ENCODE measurements at regions of chr13 and their contacts with region 1.

Region 1: GRCh38 chr13:28324181-28324789 is 170.6 kb downstream of the FLT1 start:
- DNase-seq: peak; percentile 46
- H3K4me3 ChIP-seq: no peak overlapping the region
- H3K27ac ChIP-seq: no peak overlapping the region
- H3K4me1 ChIP-seq: no peaks in the 10 kb centered on the region
- H3K27me3 ChIP-seq: no peaks in the 10 kb centered on the region
- CTCF ChIP-seq: peak; percentile 68 to 82

Region 2: DNA sequence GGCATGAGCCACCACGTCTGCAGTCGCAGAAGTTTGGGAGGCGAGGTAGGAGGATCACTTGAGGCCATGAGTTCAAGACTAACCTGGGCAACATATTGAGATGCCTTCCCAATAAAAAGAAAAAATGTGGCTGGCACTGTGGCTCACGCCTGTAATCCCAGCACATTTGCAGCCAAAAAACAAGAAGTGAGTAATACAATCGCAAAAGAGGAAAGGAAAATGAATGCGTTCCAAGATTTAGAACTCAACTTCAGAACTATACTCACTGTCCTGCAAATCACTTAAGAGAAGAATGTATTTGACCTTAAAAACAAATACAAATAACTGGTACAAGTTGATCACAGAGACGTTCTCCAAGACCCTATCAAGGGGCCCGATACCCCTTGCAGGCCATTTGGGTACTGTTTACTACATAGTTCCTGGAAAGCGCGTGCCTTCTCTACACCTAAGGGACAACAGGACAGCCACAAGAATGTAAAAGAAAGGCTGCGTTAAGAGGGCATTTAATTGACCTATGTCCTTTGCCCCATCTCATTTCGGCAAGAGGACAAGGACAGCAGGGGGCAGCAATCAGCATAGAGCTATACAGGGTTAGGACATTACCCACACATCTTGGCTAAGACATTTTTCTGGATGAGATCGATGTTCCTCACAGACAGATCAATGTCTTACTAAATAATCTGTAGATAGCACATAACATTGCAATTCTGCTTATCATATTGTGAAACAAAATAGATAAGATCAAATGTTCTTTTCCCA is 265.2 kb before region 1 on chr13:
- CTCF ChIA-PET with region 1: no interaction called
- dilution Hi-C with region 1: no loop called
- in situ Hi-C with region 1: no loop called
- intact Hi-C with region 1: loop called (anchors 5 kb)
- DNase-seq: peak; percentile 16
- H3K4me3 ChIP-seq: no peak overlapping the region
- H3K27ac ChIP-seq: no peak overlapping the region
- H3K4me1 ChIP-seq: no peaks in the 10 kb centered on the region
- H3K27me3 ChIP-seq: no peaks in the 10 kb centered on the region
- CTCF ChIP-seq: peak; percentile 45 to 67

Region 3: DNA sequence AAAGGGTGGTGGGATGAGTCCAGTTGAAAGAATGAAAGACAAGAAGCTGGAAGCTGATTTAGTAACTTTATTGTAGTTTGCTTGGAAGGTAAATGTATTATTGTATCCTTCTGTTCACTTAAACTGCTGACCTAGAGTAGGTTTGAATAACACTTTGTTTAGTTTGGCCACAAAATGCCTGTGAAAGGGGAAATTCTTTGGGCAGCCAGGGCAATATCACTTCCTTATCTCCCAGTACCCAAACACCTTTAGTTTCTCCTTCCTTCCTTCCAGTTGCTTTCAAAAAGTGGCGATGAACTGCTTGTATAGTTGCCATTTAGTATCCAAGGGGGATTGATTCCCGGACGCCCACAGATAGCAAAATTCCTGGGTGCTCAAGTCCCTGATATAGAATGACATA is 65.9 kb before region 1 on chr13:
- CTCF ChIA-PET with region 1: no interaction called
- dilution Hi-C with region 1: no loop called
- in situ Hi-C with region 1: no loop called
- intact Hi-C with region 1: no loop called
- DNase-seq: no peak
- H3K4me3 ChIP-seq: no peak overlapping the region
- H3K27ac ChIP-seq: no peak overlapping the region
- H3K4me1 ChIP-seq: no peaks in the 10 kb centered on the region
- H3K27me3 ChIP-seq: no peaks in the 10 kb centered on the region
- CTCF ChIP-seq: no peak

Region 4: DNA sequence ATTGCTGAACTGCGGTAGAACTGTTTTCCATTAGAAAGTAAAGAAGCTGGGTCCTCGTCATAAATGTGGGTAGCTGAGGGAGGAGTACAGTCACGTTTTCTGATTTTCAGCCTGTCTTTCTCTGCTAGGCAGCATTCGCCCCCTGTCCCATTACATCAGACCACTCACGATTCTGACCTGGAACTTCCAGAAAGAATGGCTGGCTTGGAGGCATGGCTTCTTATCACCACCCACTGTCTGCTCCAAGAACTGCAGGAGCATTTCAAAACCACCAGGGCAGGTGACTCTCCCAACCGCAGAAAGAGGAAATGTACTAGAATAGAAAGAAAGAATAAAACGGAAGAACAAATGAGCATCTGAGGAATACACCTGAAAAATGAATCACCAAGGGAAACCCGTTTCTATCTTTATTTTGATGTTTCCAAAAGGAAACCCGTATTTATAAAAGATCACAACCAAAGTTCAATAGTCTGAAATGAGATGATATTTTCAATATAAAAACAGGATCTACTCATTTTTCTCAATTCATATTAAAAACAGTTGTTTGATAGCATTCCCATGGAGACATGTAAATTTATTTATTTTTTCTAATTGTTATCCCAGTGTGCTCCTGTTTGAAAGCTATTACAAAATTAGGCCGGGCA is 312.5 kb after region 1 on chr13:
- CTCF ChIA-PET with region 1: no interaction called
- dilution Hi-C with region 1: no loop called
- in situ Hi-C with region 1: loop called in 1 of 2 experiments (anchors 25 kb)
- intact Hi-C with region 1: loop called (anchors 1 kb)
- DNase-seq: peak; percentile 36
- H3K4me3 ChIP-seq: no peak overlapping the region
- H3K27ac ChIP-seq: no peak overlapping the region
- H3K4me1 ChIP-seq: no peaks in the 10 kb centered on the region
- H3K27me3 ChIP-seq: no peaks in the 10 kb centered on the region
- CTCF ChIP-seq: peak; percentile 91 to 92

Region 5: DNA sequence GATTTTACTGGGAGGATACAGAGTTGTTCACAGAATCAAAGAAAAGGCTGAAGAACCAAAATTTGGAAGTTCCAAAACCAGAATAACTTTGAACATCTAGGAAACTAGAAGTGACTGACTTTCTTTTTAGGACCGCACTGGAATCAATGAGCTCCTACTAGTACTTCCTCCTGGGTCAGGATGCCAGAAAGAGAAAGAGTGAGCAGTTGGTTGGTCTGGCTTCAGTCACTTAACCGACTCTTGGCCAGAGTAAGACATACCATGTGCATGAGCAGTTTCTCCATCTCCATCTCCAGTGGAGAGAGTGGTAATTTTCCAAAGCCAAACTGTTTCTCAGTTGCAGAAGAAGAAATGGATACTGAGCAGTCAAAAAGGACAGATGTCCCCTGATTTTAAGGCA is 468.7 kb after region 1 on chr13:
- CTCF ChIA-PET with region 1: interaction called, 7 read pairs
- dilution Hi-C with region 1: no loop called
- in situ Hi-C with region 1: loop called (anchors 10 kb)
- intact Hi-C with region 1: loop called (anchors 1 kb)
- DNase-seq: peak; percentile 6
- H3K4me3 ChIP-seq: no peak overlapping the region
- H3K27ac ChIP-seq: no peak overlapping the region
- H3K4me1 ChIP-seq: no peaks in the 10 kb centered on the region
- H3K27me3 ChIP-seq: no peaks in the 10 kb centered on the region
- CTCF ChIP-seq: no peak

Region 6: GRCh38 chr13:29362849-29363604 is 1038.7 kb after region 1 on chr13:
- CTCF ChIA-PET with region 1: no interaction called
- dilution Hi-C with region 1: no loop called
- in situ Hi-C with region 1: no loop called
- intact Hi-C with region 1: loop called (anchors 10 kb)
- DNase-seq: peak; percentile 32
- H3K4me3 ChIP-seq: no peak overlapping the region
- H3K27ac ChIP-seq: no peak overlapping the region
- H3K4me1 ChIP-seq: no peaks in the 10 kb centered on the region
- H3K27me3 ChIP-seq: no peaks in the 10 kb centered on the region
- CTCF ChIP-seq: peak; percentile 97 to 99